ENCODE measurements at regions of chr9 and their contacts with region 1.

Region 1: DNA sequence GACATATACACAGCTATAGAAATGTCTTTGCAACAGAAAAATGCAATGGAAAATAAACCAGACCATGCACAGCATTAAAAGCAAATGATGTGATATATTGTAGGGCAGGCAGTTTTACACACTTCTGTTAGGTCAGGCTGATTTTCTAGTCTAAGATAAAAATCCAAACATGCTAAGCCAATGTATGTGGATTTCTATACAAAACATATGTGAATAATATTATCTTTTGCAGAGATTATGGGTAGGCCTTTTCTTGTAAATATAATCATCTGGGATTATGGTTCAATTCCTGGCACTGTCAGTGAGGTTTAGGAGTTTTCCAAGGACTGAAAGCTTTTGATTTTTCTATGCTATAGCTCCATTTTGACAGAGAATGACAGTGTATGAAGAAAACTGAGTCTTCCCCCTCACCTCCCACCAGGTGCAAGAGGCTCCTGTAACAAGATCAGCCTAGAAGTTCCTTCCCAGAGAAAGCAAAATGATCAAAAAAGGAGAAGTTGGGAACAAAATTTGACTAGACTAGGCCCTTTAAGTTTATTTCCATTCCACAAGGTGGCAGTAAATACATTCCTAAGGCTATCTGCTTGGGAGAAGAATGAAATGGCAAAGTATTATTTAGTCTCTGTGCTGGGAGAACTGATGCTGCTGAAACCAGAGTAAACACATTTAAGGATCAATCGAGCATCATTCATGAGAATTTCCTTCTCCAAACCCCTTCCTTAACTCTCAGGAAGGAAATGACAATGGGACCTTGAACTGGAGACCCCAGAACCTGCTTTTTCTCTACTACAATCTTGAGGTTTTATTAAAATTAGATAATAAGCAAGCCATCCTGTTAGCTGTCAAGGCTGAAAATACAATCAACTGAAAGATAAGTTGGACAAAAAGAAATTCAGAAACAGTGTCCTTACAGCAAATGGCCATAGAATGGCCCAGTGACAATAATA is 133.0 kb upstream of the TUT7 start:
- DNase-seq: no peak
- H3K4me3 ChIP-seq: no peak overlapping the region
- H3K27ac ChIP-seq: no peak overlapping the region
- H3K4me1 ChIP-seq: no peaks in the 10 kb centered on the region
- H3K27me3 ChIP-seq: no peaks in the 10 kb centered on the region
- CTCF ChIP-seq: peak; percentile 48 to 72 (median 51)

Region 2: GRCh38 chr9:86424251-86424891 is 62.8 kb before region 1 on chr9:
- intact Hi-C with region 1: no loop called
- DNase-seq: no peak
- H3K4me3 ChIP-seq: no peak overlapping the region
- H3K27ac ChIP-seq: no peak overlapping the region
- H3K4me1 ChIP-seq: no peaks in the 10 kb centered on the region
- H3K27me3 ChIP-seq: no peaks in the 10 kb centered on the region
- CTCF ChIP-seq: no peak

Region 3: GRCh38 chr9:86460216-86461004 is 26.8 kb before region 1 on chr9:
- intact Hi-C with region 1: no loop called
- DNase-seq: no peak
- H3K4me3 ChIP-seq: no peak overlapping the region
- H3K27ac ChIP-seq: no peak overlapping the region
- H3K4me1 ChIP-seq: no peaks in the 10 kb centered on the region
- H3K27me3 ChIP-seq: no peaks in the 10 kb centered on the region
- CTCF ChIP-seq: no peak

Region 4: GRCh38 chr9:86534572-86535258 is 47.6 kb after region 1 on chr9:
- intact Hi-C with region 1: no loop called
- DNase-seq: no peak
- H3K4me3 ChIP-seq: no peak overlapping the region
- H3K27ac ChIP-seq: no peak overlapping the region
- H3K4me1 ChIP-seq: no peaks in the 10 kb centered on the region
- H3K27me3 ChIP-seq: no peaks in the 10 kb centered on the region
- CTCF ChIP-seq: no peak

Region 5: GRCh38 chr9:86997158-86997557 is 510.0 kb after region 1 on chr9:
- intact Hi-C with region 1: loop called (anchors 5 kb)
- DNase-seq: no peak
- H3K4me3 ChIP-seq: no peak overlapping the region
- H3K27ac ChIP-seq: no peak overlapping the region
- H3K4me1 ChIP-seq: no peaks in the 10 kb centered on the region
- H3K27me3 ChIP-seq: no peaks in the 10 kb centered on the region
- CTCF ChIP-seq: no peak

Measured in ascending aorta (tissue), 2 donors.